HCT116 (cell line): ENCODE measurements at regions of chr1 and their contacts with region 1.

Region 1: DNA sequence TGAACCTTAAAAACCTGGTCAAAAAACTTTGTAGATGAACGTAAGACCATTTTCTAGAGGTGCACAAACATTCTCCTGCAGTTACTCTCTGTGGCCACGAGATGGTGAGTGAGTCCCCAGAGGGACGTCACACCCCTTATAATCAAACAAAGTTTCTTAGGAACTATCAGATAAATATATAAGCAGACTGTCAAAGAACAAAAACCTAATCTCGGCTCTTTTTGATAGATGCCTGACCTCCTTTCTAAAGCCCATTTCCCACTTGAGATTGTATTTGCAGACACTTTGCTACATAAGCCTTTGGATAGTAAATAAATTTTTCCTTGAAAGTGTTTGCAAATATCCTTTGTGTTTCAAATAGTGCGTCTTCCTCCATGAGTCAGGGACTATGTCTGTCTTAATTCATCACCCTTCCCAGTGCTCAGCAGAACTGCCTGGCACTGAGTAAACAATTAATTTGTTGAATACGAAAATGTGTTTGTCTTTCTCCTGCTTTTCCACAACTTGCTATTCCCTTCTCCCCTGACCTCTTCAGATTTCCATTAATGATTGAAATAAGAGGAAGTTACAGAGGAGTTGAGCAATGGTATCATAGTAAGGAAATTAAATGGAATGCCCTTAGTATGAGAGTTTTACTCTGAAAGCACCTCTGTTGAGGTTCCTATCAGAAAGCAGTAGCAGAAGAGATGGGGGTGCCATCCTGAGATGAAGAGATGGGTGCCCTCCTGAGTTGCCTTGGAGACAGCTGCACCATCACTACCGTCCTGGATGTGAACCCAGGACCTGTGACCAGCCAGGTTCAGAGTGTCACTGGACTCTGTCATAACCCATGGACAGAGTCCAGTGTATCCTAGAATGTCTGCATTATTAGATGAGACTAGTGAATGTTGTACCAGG is 57.8 kb upstream of the RAVER2 start:
- DNase-seq: peak; percentile 43
- ATAC-seq: peak; percentile 79
- H3K4me3 ChIP-seq: no peak overlapping the region
- H3K27ac ChIP-seq: no peak overlapping the region
- H3K4me1 ChIP-seq: no peaks in the 10 kb centered on the region
- H3K27me3 ChIP-seq: no peaks in the 10 kb centered on the region
- CTCF ChIP-seq: peak; percentile 74 to 83 (median 83)
- POLR2A ChIP-seq: no peak
- RAD21 ChIP-seq: peak; percentile 72

Region 2: GRCh38 chr1:64864018-64864940 is 177.2 kb after region 1 on chr1:
- CTCF ChIA-PET with region 1: no interaction called
- POLR2A ChIA-PET with region 1: no interaction called
- RAD21 ChIA-PET with region 1: no interaction called
- intact Hi-C with region 1: no loop called
- DNase-seq: peak; percentile 33
- ATAC-seq: peak; percentile 60
- H3K4me3 ChIP-seq: no peak overlapping the region
- H3K27ac ChIP-seq: no peak overlapping the region
- H3K4me1 ChIP-seq: peaks cover 7 to 10% of the 10 kb centered on the region in 2 experiments; a peak in 3 of 4 replicates
- H3K27me3 ChIP-seq: no peaks in the 10 kb centered on the region
- CTCF ChIP-seq: no peak
- POLR2A ChIP-seq: no peak
- RAD21 ChIP-seq: no peak; the same call in 1 of the 2 replicates

Region 3: DNA sequence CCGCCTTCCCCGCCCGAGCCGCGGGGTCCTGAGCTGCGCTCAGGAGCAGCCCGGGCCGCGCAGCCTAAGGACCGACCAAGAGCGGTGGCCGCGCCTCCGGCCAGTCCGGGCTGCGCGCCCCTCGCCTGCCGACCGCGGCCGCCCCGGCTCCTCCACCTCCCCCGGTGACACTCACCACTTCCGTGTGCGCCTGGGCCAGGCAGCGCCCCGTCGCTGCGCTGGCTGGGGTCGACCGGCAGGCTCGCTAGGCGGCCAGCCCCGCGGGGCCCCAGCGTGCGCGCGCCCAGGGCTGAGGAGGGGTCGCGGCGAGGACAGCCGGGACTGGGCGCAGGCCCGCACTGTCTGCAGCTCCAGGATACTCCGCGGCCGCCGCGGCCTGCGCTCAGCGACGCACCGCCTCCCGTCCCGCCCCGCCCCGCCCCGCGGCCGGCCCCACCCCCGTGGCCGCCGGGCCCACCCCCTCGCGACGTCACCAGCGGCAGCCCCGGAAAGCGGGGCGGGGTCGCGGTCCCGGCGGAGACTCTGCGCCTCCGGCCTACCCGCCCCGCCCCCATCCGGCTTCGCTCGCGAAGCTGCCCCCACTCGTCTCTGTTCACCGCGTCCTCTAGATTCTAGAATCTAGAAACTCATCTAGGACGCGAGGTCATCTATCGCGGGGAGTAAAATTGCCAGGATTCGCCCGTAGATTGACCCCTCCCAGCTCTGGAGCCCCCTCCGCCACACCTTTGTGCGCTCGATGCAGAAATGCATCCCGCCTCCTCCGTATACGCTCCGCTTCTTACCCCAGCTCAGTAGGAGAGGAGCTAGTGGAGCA is 279.3 kb after region 1 on chr1 and contains the start of gene JAK1:
- CTCF ChIA-PET with region 1: no interaction called
- POLR2A ChIA-PET with region 1: no interaction called
- RAD21 ChIA-PET with region 1: no interaction called
- intact Hi-C with region 1: loop called (anchors 5 kb)
- DNase-seq: no peak
- ATAC-seq: peak; percentile 91
- H3K4me3 ChIP-seq: peak within 1 kb of the TSS; percentile 82 to 90
- H3K27ac ChIP-seq: peak within 1 kb of the TSS; percentile 82
- H3K4me1 ChIP-seq: peaks cover 8 to 18% of the 10 kb centered on the region in 2 experiments; a peak in 3 of 4 replicates
- H3K27me3 ChIP-seq: no peaks in the 10 kb centered on the region
- CTCF ChIP-seq: no peak
- POLR2A ChIP-seq: peak; percentile 84
- RAD21 ChIP-seq: no peak
- total RNA-seq, gene JAK1: 53.2 TPM